Activated naive CD4-positive, alpha-beta T cell treated with anti-CD3 and anti-CD28 coated beads for 36 hours (primary cell): ENCODE measurements at regions of chr14 and their contacts with region 1.

Region 1: GRCh38 chr14:70809543-70810244 is 381 bp upstream of the MAP3K9 start:
- DNase-seq: peak; percentile 96
- H3K4me3 Mint-ChIP-seq: no peak overlapping the region
- H3K27ac Mint-ChIP-seq: peak overlapping the region; percentile 57
- H3K4me1 Mint-ChIP-seq: peaks cover 9% of the 10 kb centered on the region
- H3K27me3 Mint-ChIP-seq: no peaks in the 10 kb centered on the region

Region 2: GRCh38 chr14:70416725-70417349 is 392.9 kb before region 1 on chr14 and contains the start of gene SYNJ2BP:
- CTCF ChIA-PET with region 1: no interaction called
- intact Hi-C with region 1: loop called (anchors 10 kb)
- DNase-seq: peak; percentile 80
- H3K4me3 Mint-ChIP-seq: peak within 1 kb of the TSS; percentile 86
- H3K27ac Mint-ChIP-seq: peak within 1 kb of the TSS; percentile 64
- H3K4me1 Mint-ChIP-seq: peaks cover 29% of the 10 kb centered on the region
- H3K27me3 Mint-ChIP-seq: no peaks in the 10 kb centered on the region
- total RNA-seq, gene SYNJ2BP: 7.3 to 8.0 TPM

Region 3: GRCh38 chr14:70472253-70473159 is 337.2 kb before region 1 on chr14:
- CTCF ChIA-PET with region 1: no interaction called
- intact Hi-C with region 1: no loop called
- DNase-seq: no peak
- H3K4me3 Mint-ChIP-seq: no peak overlapping the region
- H3K27ac Mint-ChIP-seq: no peak overlapping the region
- H3K4me1 Mint-ChIP-seq: no peaks in the 10 kb centered on the region
- H3K27me3 Mint-ChIP-seq: no peaks in the 10 kb centered on the region

Region 4: DNA sequence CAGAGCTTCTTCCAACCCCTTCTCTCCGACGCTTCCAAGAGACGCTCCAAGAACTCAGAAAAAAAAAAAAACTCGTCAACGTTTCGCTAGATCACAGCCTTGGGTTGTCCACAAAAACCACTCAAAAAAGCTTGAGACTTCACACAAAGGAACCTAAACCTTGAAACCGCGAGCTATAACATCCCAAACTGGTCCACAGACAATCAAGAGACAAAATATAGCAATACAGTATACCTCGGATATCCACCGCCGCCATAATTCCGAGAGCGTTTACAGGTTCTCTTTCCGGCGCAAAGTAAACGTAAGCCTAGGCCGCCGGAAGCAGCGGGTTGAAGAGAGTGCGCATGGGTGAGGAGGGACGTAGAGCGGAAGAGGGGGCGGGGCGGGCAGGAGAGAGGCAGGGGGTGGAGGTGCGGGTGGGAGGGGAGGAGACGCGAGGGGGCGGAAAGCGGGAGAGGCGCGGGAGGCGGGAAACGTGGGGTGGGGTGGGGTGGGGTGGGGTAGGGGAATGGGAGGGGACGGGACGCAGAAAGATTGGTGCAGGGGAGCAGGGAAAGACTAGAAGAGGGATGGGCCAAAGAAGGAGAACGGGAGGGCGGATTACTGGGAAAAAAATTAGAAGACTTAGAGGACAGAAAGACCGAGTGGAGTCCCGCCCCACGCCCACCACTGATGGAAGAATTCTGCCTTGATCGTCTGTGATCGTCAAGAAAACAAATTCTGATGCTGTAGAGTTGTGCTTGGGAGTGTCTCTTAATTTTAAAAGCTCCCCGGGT is 209.1 kb before region 1 on chr14 and contains the start of gene MED6:
- CTCF ChIA-PET with region 1: no interaction called
- intact Hi-C with region 1: loop called (anchors 1 kb)
- DNase-seq: peak; percentile 96
- H3K4me3 Mint-ChIP-seq: peak within 1 kb of the TSS; percentile 98
- H3K27ac Mint-ChIP-seq: peak within 1 kb of the TSS; percentile 93
- H3K4me1 Mint-ChIP-seq: peaks cover 23% of the 10 kb centered on the region
- H3K27me3 Mint-ChIP-seq: peaks cover 2% of the 10 kb centered on the region
- total RNA-seq, gene MED6: 48.5 to 48.9 TPM

Region 5: DNA sequence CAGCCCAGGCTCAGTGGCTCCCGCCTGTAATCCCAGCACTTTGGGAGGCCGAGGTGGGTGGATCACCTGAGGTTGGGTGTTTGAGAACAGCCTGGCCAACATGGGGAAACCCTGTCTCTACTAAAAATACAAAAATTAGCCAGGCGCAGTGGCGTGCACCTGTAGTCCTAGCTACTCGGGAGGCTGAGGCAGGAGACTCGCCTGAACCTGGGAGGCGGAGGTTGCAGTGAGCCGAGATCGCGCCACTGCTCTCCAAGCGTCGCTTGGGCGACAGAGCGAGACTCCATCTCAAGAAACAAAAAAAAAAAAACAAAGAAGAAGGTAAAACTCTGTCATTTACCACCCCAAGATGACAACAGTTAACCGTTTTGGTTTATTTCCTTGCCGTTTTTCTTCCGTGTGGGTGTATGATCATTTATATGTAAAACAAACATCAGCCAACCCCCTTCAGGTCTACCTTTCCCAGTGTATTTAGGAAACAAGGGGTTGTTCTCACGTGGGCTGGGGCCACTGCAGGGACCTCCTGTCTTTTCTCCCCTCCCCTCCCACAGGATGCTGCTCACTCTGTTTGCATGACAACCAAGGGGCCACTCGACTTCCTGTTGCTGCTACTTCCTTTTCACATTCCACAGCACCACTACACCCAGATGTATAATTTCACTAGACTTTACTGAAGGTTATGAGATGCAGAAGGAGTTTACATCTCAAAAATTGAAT is 154.4 kb before region 1 on chr14:
- CTCF ChIA-PET with region 1: no interaction called
- intact Hi-C with region 1: loop called (anchors 2 kb)
- DNase-seq: peak; percentile 92
- H3K4me3 Mint-ChIP-seq: peak overlapping the region; percentile 83
- H3K27ac Mint-ChIP-seq: peak overlapping the region; percentile 98
- H3K4me1 Mint-ChIP-seq: peaks cover 81% of the 10 kb centered on the region
- H3K27me3 Mint-ChIP-seq: no peaks in the 10 kb centered on the region

Region 6: DNA sequence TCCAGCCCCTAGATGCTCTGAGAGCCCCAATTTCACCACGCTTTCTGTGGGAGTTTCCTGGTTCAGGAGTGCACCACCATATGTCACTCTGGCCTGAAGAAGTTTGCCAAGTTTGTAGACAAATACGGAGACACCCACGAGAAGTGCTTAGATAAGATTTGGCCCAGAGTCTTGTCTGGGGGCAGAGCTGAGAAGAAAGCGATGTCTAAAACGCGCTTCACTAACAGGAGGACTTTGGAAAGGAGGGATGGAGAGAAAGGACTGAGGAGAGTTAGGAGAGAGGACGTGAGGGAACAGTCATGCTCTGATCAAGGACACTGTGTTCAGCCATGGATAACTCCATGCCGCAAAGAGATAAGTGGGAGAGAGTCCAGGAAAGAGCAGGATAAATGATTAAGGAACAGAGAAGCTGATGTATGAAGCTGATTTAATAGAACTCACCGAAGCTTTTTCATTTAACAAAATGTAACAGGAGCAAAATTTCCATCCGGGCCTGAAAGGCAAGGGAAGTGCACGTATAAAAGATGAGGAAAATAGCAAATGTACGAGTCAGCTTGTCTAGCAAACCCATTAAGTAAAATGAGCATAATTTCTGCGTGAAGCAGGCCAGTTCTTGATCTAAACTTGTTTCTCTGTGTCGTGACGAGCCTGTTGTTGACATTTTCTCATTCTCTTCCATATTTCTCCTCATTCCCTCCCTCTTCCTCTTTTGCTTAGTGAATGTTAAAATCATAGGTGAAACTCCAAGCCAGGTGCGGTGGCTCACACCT is 23.0 kb after region 1 on chr14:
- CTCF ChIA-PET with region 1: no interaction called
- intact Hi-C with region 1: no loop called
- DNase-seq: no peak
- H3K4me3 Mint-ChIP-seq: no peak overlapping the region
- H3K27ac Mint-ChIP-seq: no peak overlapping the region
- H3K4me1 Mint-ChIP-seq: no peaks in the 10 kb centered on the region
- H3K27me3 Mint-ChIP-seq: no peaks in the 10 kb centered on the region